Activated T-helper 2 cell treated with anti-CD3 and anti-CD28 coated beads, Interferon-gamma antibody, Interleukin-2, Interleukin-4, amounts not matched to agents 10 μg/mL and 5 μg/mL and 100 μg/mL, durations not matched to agents 14 hours and 24 hours and 36 hours (primary cell): ENCODE measurements at regions of chr13 and their contacts with region 1.

Region 1: DNA sequence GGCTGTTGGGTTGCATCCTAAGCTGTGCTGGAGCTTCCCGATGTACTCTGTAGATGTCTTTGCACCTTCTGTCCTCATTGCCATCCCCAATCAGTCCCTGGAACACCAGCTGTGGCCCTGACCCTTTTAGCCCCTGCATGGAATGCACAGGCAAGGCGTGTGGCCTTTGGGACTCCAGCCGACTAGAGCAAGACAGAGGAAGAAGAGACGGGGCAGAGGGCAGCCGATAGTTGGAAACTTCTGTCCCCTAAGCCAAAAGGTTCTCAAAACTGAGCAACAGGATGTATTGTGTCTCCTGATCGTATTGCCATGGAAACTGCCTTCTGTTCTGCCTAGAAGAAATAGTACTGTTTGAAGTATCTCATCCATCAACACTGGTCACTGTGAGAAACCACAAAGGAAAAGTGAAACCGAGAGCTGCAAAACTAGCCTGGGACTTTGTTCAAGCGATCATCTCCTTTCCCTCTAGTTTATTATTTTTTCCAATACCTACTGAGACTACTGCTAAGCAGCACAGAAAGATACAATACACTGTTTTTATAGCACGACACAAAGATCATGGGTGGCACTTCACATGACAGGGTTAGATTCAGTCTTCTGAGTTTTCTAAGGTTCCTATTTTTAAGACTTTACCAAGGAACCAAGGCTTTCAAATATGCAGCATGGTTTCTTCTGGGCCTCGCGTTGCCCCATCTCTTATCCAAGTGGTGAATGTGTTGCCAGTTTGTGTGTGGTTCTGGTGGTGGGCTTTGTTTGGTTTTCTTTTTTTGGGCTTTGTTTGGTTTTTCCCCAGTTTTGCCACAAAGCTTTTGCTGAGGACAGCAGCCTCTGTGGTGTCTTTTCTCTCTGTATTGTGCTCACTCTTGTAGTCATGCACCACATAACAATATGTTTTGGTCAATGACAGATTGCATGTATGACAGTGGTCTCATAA is 49.2 kb upstream of the GPR183 start:
- DNase-seq: peak; percentile 74
- H3K4me3 Mint-ChIP-seq: peak overlapping the region; percentile 50
- H3K27ac Mint-ChIP-seq: peak overlapping the region; percentile 98
- H3K4me1 Mint-ChIP-seq: peaks cover 92% of the 10 kb centered on the region
- H3K27me3 Mint-ChIP-seq: no peaks in the 10 kb centered on the region

Region 2: DNA sequence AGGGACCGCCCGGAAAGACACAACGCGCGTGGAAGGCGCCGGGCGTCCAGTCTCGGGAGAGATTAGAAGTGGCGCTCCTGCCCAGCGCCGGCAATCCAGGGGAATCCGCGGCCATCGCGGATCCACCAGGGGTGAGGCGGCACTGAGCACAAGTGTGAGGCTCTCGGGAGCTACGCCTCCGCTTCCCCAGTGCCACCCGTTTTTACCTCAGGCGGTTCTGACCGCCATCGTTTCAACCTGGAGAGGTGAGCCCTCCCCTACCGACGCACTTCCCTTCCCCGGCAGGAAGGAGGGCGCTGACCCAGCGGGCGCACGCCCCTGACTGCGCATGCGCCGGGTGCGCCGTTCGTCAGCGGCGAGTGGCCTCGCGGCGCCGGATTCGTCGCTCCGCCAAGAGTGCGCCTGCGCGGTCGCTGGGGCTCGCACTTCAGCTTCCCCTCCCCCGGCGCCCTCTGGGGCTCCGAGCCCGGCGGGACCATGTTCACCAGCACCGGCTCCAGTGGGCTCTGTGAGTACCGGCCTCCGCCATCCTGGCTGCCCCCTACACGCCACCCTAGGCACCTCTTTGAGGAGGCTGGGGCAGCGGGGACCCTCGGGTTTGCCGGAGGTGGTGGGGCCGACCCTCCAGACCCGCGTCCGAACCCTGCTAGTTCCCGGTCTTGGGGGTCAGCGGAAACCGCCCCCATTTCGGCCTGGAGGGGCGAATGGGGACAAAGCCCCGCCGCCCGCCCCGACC is 155.8 kb before region 1 on chr13 and contains the start of gene UBAC2:
- intact Hi-C with region 1: no loop called
- DNase-seq: peak; percentile 96
- H3K4me3 Mint-ChIP-seq: peak within 1 kb of the TSS; percentile 97
- H3K27ac Mint-ChIP-seq: peak within 1 kb of the TSS; percentile 93
- H3K4me1 Mint-ChIP-seq: peaks cover 53% of the 10 kb centered on the region
- H3K27me3 Mint-ChIP-seq: no peaks in the 10 kb centered on the region
- total RNA-seq, gene UBAC2: 53.4 and 55.1 TPM in 2 replicates

Region 3: DNA sequence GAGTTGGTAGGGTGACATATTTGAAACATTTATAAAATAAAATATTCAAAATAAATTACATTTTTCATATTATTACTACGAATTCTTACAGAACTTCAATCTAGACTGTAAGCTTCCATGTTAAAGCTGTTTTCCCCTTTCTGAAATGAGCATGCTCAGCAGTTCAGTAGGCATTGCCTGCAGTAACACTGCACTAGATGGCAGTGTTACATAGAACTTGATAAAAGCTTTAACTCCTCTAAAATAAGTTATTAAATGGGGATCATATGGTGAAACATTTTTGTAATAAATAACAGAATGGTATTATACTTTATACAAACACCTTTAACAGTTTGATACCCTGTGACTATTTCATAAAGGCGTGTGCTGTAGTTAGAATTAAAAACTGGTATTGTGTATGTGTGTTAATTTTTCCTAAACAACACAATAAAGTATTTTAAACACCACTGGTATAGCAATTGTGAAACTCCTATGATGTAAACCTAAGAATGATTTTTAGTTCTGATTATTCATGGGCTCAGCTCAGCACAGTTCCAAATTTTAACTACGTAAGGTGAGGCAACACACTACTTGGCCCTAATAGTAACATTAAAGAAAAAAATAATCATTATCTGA is 86.7 kb before region 1 on chr13:
- intact Hi-C with region 1: loop called (anchors 1 kb)
- DNase-seq: no peak
- H3K4me3 Mint-ChIP-seq: no peak overlapping the region
- H3K27ac Mint-ChIP-seq: no peak overlapping the region
- H3K4me1 Mint-ChIP-seq: peaks cover 54% of the 10 kb centered on the region
- H3K27me3 Mint-ChIP-seq: no peaks in the 10 kb centered on the region

Region 4: DNA sequence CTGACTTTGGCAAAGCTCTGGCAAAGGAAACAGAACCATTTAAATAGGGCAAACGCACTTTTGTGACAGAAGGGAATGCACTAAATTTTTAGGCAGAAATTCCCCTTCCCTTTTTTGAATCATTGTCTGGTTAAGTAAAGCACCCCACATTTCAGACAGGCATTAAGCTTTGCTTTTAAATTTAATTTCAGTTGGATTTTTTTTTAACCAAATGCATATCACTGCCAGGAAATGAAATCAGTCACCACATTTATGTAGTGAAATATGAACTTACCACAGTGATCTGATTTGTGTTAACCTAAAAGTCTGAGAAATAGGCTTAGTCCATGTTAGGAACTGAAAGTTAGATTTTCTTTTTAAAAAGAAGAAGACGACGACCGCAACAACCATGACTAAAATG is 60.0 kb before region 1 on chr13:
- intact Hi-C with region 1: loop called (anchors 1 kb)
- DNase-seq: no peak
- H3K4me3 Mint-ChIP-seq: peak overlapping the region; percentile 73
- H3K27ac Mint-ChIP-seq: peak overlapping the region; percentile 87
- H3K4me1 Mint-ChIP-seq: peaks cover 74% of the 10 kb centered on the region
- H3K27me3 Mint-ChIP-seq: no peaks in the 10 kb centered on the region

Region 5: GRCh38 chr13:99314640-99315176 is 41.7 kb before region 1 on chr13:
- intact Hi-C with region 1: loop called (anchors 2 kb)
- DNase-seq: peak; percentile 63
- H3K4me3 Mint-ChIP-seq: peak overlapping the region; percentile 72
- H3K27ac Mint-ChIP-seq: peak overlapping the region; percentile 96
- H3K4me1 Mint-ChIP-seq: peaks cover 70% of the 10 kb centered on the region
- H3K27me3 Mint-ChIP-seq: no peaks in the 10 kb centered on the region

Region 6: GRCh38 chr13:99331881-99332293 is 24.5 kb before region 1 on chr13:
- intact Hi-C with region 1: loop called (anchors 2 kb)
- DNase-seq: no peak
- H3K4me3 Mint-ChIP-seq: no peak overlapping the region
- H3K27ac Mint-ChIP-seq: peak overlapping the region; percentile 69
- H3K4me1 Mint-ChIP-seq: peaks cover 48% of the 10 kb centered on the region
- H3K27me3 Mint-ChIP-seq: no peaks in the 10 kb centered on the region

Region 7: DNA sequence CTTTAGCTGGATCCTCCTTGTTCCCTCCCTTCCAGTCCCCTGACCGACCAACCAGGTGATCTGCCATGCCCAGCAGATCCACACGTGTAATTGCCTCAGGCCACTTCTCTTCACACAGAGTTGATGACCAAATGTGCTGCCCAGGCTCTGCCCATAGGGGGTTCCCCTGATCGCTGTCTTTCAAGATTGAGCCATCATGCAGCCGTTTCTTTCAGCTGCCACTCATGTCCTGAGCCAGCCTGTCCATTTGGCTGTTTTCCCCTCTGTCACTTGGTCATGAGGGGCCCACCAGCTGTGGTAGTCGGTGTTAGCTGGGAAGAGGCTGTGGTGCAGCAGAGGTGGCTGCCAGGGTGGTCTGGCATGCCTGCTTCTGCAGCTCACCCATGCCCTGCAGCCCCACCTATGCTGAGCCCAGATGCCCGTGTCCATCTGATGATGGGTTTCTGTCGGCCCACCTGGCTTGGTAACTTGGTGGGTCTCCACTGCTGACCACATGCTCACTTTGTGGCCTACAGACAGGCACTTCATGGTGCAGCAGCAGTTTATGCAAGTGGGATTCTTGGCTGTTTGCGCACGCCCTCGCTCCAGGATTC is 13.6 kb before region 1 on chr13:
- intact Hi-C with region 1: no loop called
- DNase-seq: no peak
- H3K4me3 Mint-ChIP-seq: no peak overlapping the region
- H3K27ac Mint-ChIP-seq: no peak overlapping the region
- H3K4me1 Mint-ChIP-seq: peaks cover 46% of the 10 kb centered on the region
- H3K27me3 Mint-ChIP-seq: no peaks in the 10 kb centered on the region

Region 8: DNA sequence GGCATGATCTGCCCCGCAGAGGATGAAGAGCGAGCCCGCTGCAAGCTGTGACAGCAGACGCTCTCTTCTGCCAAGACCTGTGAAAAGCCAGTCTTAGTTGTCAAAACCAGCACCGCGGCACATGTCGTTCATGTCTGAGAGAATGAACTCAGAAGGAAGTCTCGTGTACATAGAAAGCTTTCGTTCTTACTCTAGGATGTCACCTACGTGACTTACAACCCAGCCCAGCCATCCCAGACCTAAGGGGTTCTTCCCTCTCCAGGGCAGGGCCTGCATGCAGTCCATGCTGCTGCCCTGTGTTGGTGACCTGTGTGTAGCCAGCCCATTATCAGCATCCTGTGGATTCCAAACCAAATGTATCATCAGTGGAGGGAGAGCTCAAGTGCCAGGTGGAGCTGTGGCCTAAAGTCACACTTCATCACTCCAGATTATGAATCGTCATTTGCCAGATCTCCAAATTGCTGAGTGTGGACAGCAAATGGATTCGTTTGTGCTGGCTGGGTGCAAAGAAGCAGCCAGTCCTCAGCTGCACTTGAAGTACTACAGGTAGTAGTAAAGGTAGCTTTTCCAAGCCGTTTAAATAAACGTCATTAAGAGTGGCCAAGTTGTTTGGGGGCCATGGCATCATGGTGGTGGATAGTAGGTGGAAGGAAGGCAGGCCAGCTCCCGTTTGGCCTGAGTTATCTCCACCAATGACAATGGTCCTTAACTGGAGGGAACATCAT is 24.7 kb after region 1 on chr13:
- intact Hi-C with region 1: loop called (anchors 1 kb)
- DNase-seq: peak; percentile 62
- H3K4me3 Mint-ChIP-seq: peak overlapping the region; percentile 27
- H3K27ac Mint-ChIP-seq: peak overlapping the region; percentile 82
- H3K4me1 Mint-ChIP-seq: peaks cover 80% of the 10 kb centered on the region
- H3K27me3 Mint-ChIP-seq: no peaks in the 10 kb centered on the region